ENCODE measurements at regions of chr7 and their contacts with region 1.

Region 1: GRCh38 chr7:17041324-17041723 is 159.5 kb upstream of the AGR3 start:
- DNase-seq: peak in 1 of 2 experiments; percentile 97
- H3K4me3 ChIP-seq: peak overlapping the region; percentile 11; the same call in 1 of the 2 replicates
- H3K27ac ChIP-seq: peak overlapping the region; percentile 97
- H3K4me1 ChIP-seq: peaks cover 83% of the 10 kb centered on the region
- H3K27me3 ChIP-seq: no peaks in the 10 kb centered on the region
- CTCF ChIP-seq: no peak

Region 2: DNA sequence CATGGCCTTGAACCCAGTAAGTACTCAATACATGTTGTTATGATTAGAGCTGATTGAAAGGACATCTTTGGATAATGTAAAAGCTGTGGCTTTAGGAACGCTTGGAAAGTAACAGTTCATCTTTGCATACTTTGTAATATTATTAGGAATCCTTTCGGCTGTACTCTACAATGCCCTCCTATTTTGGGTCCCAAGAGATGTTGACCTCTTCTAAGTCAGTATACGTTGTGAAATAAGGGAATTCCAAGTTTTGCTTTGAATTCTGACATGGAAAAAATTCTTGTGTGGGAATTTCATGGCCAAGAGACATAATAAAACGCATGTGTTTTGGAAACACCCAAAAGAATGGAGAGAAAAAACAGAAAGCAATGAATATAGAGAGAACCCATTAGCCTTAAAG is 167.3 kb before region 1 on chr7:
- CTCF ChIA-PET with region 1: no interaction called
- POLR2A ChIA-PET with region 1: no interaction called
- intact Hi-C with region 1: no loop called
- DNase-seq: no peak
- H3K4me3 ChIP-seq: no peak overlapping the region
- H3K27ac ChIP-seq: no peak overlapping the region
- H3K4me1 ChIP-seq: no peaks in the 10 kb centered on the region
- H3K27me3 ChIP-seq: no peaks in the 10 kb centered on the region
- CTCF ChIP-seq: no peak

Region 3: DNA sequence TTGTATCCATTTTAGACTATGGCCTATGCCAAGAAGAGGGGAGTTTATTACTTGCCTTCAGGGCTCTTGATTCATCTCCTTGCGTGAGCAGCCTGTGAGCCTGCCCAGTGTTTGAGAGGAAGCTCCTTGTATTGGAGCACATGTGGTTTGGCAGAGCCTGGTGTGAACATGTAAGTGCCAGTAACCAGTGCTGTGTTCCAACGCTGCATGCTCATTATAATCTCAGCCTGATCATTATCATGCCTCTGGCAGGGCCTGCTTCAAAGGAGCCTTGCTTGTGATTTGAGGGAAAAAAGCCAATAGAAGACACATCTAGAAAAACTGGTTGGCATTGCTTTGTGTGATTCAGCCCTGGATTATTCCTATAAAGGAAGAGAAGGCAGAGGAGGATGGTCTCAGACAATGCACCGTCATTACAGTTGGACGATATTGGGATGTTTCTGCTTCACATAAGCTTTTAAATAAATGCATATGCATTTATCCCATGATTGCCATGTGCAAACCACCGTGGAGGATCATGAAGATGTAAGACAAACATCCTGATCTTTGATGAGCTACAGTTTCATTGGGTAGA is 53.8 kb after region 1 on chr7:
- CTCF ChIA-PET with region 1: no interaction called
- POLR2A ChIA-PET with region 1: interaction called, 7 read pairs
- intact Hi-C with region 1: loop called (anchors 2 kb)
- DNase-seq: peak; percentile 63 to 89
- H3K4me3 ChIP-seq: no peak overlapping the region
- H3K27ac ChIP-seq: peak overlapping the region; percentile 24; the same call in 1 of the 2 replicates
- H3K4me1 ChIP-seq: peaks cover 19% of the 10 kb centered on the region
- H3K27me3 ChIP-seq: no peaks in the 10 kb centered on the region
- CTCF ChIP-seq: no peak

Region 4: GRCh38 chr7:17234398-17235031 is 193.2 kb after region 1 on chr7:
- CTCF ChIA-PET with region 1: no interaction called
- POLR2A ChIA-PET with region 1: no interaction called
- intact Hi-C with region 1: loop called (anchors 1 kb)
- DNase-seq: peak; percentile 56 to 97
- H3K4me3 ChIP-seq: peak overlapping the region; percentile 21; the same call in 1 of the 2 replicates
- H3K27ac ChIP-seq: peak overlapping the region; percentile 67
- H3K4me1 ChIP-seq: peaks cover 32% of the 10 kb centered on the region
- H3K27me3 ChIP-seq: no peaks in the 10 kb centered on the region
- CTCF ChIP-seq: no peak

Region 5: DNA sequence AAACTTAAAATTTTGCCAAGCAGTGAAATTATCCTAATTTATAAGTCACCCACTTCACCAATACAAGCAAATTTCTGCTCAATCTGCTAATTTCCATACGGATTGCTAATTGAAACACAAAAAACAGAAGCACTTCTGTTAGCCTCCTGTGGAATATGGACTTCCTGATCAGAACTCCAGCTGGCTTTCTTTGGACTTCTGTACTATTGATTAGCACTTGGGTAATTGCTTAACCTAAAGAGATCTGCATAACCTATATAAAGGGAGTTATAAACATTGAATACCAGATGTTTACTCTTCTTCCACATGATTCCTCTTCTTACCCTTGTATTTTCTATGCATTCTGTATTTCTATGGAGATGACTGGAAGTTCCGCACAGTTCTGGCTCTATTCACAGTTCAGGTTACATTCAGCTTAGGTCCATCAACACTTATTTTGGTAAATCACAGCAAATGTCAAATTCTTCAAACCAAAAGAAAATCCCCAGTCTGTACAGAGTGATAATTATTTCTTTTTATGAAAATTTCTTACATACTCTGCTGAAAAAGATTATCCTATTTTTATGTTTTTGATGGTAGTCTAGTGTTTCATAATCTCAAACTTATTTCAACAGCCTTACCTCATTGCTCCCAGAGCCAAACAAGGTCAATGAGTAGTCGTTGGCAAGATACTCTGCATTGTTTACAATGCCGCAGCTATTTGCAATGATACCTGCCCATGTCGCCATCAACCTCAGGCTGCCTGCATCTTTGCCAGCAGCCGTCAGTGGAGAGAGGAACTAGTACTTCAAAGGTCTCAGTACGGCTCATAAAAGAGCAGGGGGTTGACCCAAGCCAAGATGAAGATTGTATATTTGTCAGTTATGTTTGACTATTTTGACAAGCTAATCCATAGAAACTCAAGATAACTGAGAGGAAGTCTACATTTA is 482.8 kb after region 1 on chr7:
- CTCF ChIA-PET with region 1: no interaction called
- POLR2A ChIA-PET with region 1: no interaction called
- intact Hi-C with region 1: loop called (anchors 10 kb)
- DNase-seq: peak; percentile 64 to 94
- H3K4me3 ChIP-seq: no peak overlapping the region
- H3K27ac ChIP-seq: peak overlapping the region; percentile 24
- H3K4me1 ChIP-seq: peaks cover 12% of the 10 kb centered on the region
- H3K27me3 ChIP-seq: no peaks in the 10 kb centered on the region
- CTCF ChIP-seq: no peak

Measured in PC-9 (cell line).